ENCODE measurements at regions of chr20 and their contacts with region 1.

Region 1: GRCh38 chr20:31822421-31823330 is 3.5 kb downstream of the MYLK2 start:
- DNase-seq: peak; percentile 81 to 91 (median 89)
- ATAC-seq: peak; percentile 75 to 90 (median 82)
- H3K4me3 ChIP-seq: no peak overlapping the region
- H3K27ac ChIP-seq: peak overlapping the region in 9 of 12 donors; percentile 7 to 66 (median 24)
- H3K4me1 ChIP-seq: peaks cover 0 to 21% (median 5%) of the 10 kb centered on the region in 12 donors
- H3K27me3 ChIP-seq: no peaks in the 10 kb centered on the region
- CTCF ChIP-seq: peak; percentile 97 to 100 (median 99)
- POLR2A ChIP-seq: peak in 1 of 2 donors; percentile 14

Region 2: DNA sequence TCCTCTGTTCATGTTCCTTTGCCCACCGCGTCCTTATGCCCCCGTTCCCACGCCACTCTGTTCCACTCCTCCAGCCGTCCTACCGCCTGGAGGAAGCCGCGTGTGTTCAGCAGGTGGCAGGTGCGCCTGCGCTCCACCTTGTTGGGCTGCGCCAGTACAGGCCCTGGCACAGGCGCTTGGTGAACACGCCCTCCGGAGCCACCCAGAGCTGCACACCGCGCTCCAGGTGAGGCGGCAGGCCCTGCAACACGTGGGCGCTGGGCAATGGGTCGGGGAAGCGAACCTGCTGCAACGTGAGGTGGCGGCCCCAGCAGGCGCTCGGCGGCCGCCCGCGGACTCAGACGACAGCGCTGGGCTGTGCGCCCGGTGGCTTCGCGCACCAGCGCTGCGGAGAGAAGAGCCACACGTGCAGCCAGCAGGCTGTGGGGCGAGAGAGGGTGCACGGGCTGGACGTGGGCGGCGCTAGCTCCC is 26.8 kb after region 1 on chr20:
- intact Hi-C with region 1: loop called in 4 of 10 experiments (anchors 1 to 2 kb)
- DNase-seq: no peak
- ATAC-seq: peak in 1 of 4 donors; percentile 19
- H3K4me3 ChIP-seq: no peak overlapping the region
- H3K27ac ChIP-seq: no peak overlapping the region
- H3K4me1 ChIP-seq: peaks cover 0 to 19% (median 2%) of the 10 kb centered on the region in 12 donors
- H3K27me3 ChIP-seq: peaks cover 0 to 54% (median 19%) of the 10 kb centered on the region in 9 donors
- CTCF ChIP-seq: no peak
- POLR2A ChIP-seq: no peak

Region 3: GRCh38 chr20:31908016-31908415 is 85.3 kb after region 1 on chr20:
- intact Hi-C with region 1: no loop called
- DNase-seq: no peak
- ATAC-seq: no peak
- H3K4me3 ChIP-seq: no peak overlapping the region
- H3K27ac ChIP-seq: no peak overlapping the region
- H3K4me1 ChIP-seq: no peaks in the 10 kb centered on the region
- H3K27me3 ChIP-seq: no peaks in the 10 kb centered on the region
- CTCF ChIP-seq: no peak
- POLR2A ChIP-seq: no peak

Region 4: DNA sequence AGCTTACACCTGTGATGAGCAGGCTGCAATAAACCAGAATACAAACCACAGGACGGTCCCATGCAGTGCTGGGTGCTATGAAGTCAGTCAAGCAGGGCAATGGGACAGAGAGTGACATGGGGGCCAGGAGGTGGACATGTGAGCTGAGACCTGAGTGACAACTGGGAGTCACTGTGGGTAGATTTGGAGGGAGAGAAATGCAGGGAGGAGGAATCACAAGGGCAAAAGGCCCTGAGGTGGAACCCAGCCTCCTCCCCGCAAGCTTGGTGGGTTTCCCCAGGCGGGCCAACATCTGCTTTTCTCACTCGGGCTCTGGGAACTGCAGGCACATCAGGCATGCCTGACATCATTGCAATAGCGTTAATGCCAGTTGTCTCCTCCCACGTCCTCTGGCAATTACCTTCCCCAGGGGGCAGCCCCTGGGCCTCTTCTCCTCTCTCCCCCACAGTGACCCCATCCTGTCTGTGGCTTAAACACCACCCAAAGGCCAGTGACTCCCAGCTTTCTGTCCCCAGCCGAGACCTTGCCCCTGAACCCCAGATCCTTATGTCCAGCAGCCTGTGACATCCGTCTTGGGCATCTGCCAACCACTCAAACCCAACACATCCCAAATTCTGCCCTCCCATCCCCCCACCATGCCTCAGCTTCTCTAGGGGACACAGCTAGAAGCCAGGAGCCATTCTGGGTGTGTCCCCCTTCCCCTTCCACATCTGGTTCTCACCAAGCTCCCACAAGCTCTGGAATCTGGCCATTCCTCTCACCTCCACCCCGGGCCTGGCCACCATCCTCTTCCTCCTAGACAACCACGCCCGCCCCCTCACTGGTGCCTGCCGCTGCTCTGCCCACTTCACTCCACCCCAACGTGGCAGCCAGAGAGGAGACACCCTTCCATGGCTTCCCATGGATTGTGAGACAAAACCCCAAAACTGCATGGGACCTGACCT is 101.0 kb after region 1 on chr20:
- intact Hi-C with region 1: no loop called
- DNase-seq: no peak
- ATAC-seq: no peak
- H3K4me3 ChIP-seq: no peak overlapping the region
- H3K27ac ChIP-seq: no peak overlapping the region
- H3K4me1 ChIP-seq: no peaks in the 10 kb centered on the region
- H3K27me3 ChIP-seq: peaks cover 0 to 18% (median 0%) of the 10 kb centered on the region in 9 donors
- CTCF ChIP-seq: no peak
- POLR2A ChIP-seq: no peak

Region 5: DNA sequence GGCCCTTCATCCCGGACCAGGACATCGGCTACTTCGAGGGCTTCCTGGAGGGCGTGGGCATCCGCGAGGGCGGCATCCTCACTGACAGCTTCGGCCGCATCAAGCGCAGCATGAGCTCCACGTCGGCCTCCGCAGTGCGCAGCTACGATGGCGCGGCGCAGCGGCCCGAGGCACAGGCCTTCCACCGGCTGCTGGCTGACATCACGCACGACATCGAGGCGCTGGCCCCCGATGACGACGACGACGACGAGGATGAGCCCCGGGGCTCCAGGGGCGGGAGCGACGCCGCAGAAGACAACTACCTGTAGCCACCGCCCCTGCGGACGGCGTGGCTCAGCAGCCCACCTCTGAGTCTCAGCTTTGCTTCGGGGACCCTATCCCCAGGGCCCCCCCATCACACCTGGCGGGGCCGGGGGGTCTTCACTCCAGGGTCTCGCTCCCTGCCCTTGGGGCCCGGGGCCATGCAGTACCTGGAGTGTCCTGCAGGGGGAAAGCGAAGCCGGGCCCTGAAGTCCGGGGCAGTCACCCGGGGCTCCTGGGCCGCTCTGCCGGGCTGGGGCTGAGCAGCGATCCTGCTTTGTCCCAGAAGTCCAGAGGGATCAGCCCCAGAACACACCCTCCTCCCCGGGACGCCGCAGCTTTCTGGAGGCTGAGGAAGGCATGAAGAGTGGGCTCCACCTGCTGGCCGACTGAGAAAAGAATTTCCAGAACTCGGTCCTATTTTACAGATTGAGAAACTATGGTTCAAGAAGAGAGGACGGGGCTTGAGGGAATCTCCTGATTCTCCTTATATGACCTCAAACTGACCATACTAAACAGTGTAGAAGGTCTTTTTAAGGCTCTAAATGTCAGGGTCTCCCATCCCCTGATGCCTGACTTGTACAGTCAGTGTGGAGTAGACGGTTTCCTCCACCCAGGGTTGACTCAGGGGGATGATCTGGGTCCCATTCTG is 208.6 kb after region 1 on chr20:
- intact Hi-C with region 1: loop called (anchors 2 to 10 kb)
- DNase-seq: peak; percentile 78 to 88 (median 84)
- ATAC-seq: peak; percentile 72 to 90 (median 82)
- H3K4me3 ChIP-seq: peak overlapping the region in 11 of 12 donors; percentile 2 to 42 (median 32)
- H3K27ac ChIP-seq: no peak overlapping the region
- H3K4me1 ChIP-seq: peaks cover 3 to 50% (median 8%) of the 10 kb centered on the region in 12 donors
- H3K27me3 ChIP-seq: peaks cover 0 to 28% (median 4%) of the 10 kb centered on the region in 9 donors
- CTCF ChIP-seq: peak; percentile 82 to 97 (median 90)
- POLR2A ChIP-seq: no peak

Region 6: GRCh38 chr20:32091888-32092346 is 269.2 kb after region 1 on chr20:
- intact Hi-C with region 1: loop called in 8 of 10 experiments (anchors 2 to 10 kb)
- DNase-seq: peak; percentile 68 to 83 (median 75)
- ATAC-seq: peak in 3 of 4 donors; percentile 74 to 80 (median 78)
- H3K4me3 ChIP-seq: no peak overlapping the region
- H3K27ac ChIP-seq: no peak overlapping the region
- H3K4me1 ChIP-seq: peaks cover 0 to 5% (median 0%) of the 10 kb centered on the region in 12 donors
- H3K27me3 ChIP-seq: no peaks in the 10 kb centered on the region
- CTCF ChIP-seq: peak; percentile 82 to 96 (median 91)
- POLR2A ChIP-seq: no peak

Measured in heart left ventricle (tissue), 16 donors.